IMR-90 (cell line): ENCODE measurements at regions of chr19 and their contacts with region 1.

Region 1: DNA sequence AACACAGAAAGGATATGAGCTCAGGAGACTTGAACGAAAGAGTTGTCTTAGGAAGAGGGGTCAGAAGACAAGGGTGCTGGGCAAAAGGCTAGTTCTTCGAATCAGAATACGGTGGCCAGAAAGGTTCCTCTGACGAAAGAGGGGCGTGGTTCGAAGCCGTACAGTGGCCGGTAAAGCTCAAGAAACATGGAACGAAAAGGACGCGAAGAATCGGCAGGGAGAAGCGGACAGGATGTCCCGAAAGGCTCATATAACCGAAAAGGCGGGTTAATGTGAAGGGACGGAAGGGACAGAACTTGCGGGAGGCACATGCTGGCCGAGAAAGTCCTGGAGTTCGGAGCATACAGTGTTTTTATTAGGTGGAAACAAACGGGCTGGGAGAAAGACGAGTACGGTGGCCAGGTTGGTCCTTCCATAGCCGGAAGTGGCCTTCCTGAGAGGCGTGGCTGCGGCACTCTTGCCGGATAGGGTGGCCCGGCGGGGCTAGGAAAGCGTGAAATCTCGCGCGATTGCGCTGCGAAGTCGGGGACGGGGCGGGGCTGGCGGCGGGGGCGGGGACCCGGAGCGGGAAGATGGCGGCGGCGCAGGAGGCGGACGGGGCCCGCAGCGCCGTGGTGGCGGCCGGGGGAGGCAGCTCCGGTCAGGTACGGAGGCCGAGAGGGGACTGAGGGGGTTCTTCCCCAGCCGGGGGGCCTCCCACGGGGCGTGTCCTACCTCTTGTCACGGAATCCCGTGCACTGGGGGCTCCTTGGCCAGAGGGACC is at the start of gene CLPTM1:
- DNase-seq: peak; percentile 97
- ATAC-seq: peak; percentile 95
- H3K4me3 ChIP-seq: peak within 1 kb of the TSS; percentile 84
- H3K27ac ChIP-seq: peak within 1 kb of the TSS; percentile 95
- H3K4me1 ChIP-seq: peaks cover 7% of the 10 kb centered on the region
- H3K27me3 ChIP-seq: no peaks in the 10 kb centered on the region
- CTCF ChIP-seq: no peak
- POLR2A ChIP-seq: peak; percentile 80
- RAD21 ChIP-seq: no peak
- total RNA-seq, gene CLPTM1: 23.8 and 27.8 TPM in 2 replicates

Region 2: GRCh38 chr19:44689056-44689895 is 265.7 kb before region 1 on chr19:
- CTCF ChIA-PET with region 1: no interaction called
- POLR2A ChIA-PET with region 1: no interaction called
- dilution Hi-C with region 1: no loop called
- in situ Hi-C with region 1: loop called (anchors 10 kb)
- intact Hi-C with region 1: no loop called
- DNase-seq: peak; percentile 72
- ATAC-seq: peak; percentile 62
- H3K4me3 ChIP-seq: no peak overlapping the region
- H3K27ac ChIP-seq: no peak overlapping the region
- H3K4me1 ChIP-seq: peaks cover 8% of the 10 kb centered on the region
- H3K27me3 ChIP-seq: no peaks in the 10 kb centered on the region
- CTCF ChIP-seq: peak; percentile 86
- POLR2A ChIP-seq: no peak
- RAD21 ChIP-seq: peak; percentile 82

Region 3: GRCh38 chr19:44890366-44891015 is 64.5 kb before region 1 on chr19:
- CTCF ChIA-PET with region 1: interaction called, 4 read pairs
- POLR2A ChIA-PET with region 1: no interaction called
- dilution Hi-C with region 1: no loop called
- in situ Hi-C with region 1: no loop called
- intact Hi-C with region 1: loop called (anchors 1 kb)
- DNase-seq: peak; percentile 100
- ATAC-seq: peak; percentile 89
- H3K4me3 ChIP-seq: peak overlapping the region; percentile 49
- H3K27ac ChIP-seq: peak overlapping the region; percentile 69
- H3K4me1 ChIP-seq: peaks cover 4% of the 10 kb centered on the region
- H3K27me3 ChIP-seq: no peaks in the 10 kb centered on the region
- CTCF ChIP-seq: 0 out of 2 replicates have a peak, but pooled peaks have one; percentile 1
- POLR2A ChIP-seq: peak; percentile 70
- RAD21 ChIP-seq: 0 out of 2 replicates have a peak, but pooled peaks have one; percentile 14

Region 4: GRCh38 chr19:44912854-44913253 is 42.2 kb before region 1 on chr19:
- CTCF ChIA-PET with region 1: interaction called, 5 read pairs
- POLR2A ChIA-PET with region 1: no interaction called
- dilution Hi-C with region 1: no loop called
- in situ Hi-C with region 1: loop called (anchors 5 kb)
- intact Hi-C with region 1: no loop called
- DNase-seq: no peak
- ATAC-seq: no peak
- H3K4me3 ChIP-seq: no peak overlapping the region
- H3K27ac ChIP-seq: no peak overlapping the region
- H3K4me1 ChIP-seq: peaks cover 12% of the 10 kb centered on the region
- H3K27me3 ChIP-seq: no peaks in the 10 kb centered on the region
- CTCF ChIP-seq: no peak
- POLR2A ChIP-seq: no peak
- RAD21 ChIP-seq: no peak

Region 5: GRCh38 chr19:45008552-45008951 is 53.5 kb after region 1 on chr19:
- CTCF ChIA-PET with region 1: no interaction called
- POLR2A ChIA-PET with region 1: no interaction called
- dilution Hi-C with region 1: no loop called
- in situ Hi-C with region 1: no loop called
- intact Hi-C with region 1: no loop called
- DNase-seq: no peak
- ATAC-seq: no peak
- H3K4me3 ChIP-seq: no peak overlapping the region
- H3K27ac ChIP-seq: no peak overlapping the region
- H3K4me1 ChIP-seq: no peaks in the 10 kb centered on the region
- H3K27me3 ChIP-seq: no peaks in the 10 kb centered on the region
- CTCF ChIP-seq: no peak
- POLR2A ChIP-seq: no peak
- RAD21 ChIP-seq: no peak